Left ventricle myocardium superior (tissue), 1 donor: ENCODE measurements at regions of chr1 and their contacts with region 1.

Region 1: DNA sequence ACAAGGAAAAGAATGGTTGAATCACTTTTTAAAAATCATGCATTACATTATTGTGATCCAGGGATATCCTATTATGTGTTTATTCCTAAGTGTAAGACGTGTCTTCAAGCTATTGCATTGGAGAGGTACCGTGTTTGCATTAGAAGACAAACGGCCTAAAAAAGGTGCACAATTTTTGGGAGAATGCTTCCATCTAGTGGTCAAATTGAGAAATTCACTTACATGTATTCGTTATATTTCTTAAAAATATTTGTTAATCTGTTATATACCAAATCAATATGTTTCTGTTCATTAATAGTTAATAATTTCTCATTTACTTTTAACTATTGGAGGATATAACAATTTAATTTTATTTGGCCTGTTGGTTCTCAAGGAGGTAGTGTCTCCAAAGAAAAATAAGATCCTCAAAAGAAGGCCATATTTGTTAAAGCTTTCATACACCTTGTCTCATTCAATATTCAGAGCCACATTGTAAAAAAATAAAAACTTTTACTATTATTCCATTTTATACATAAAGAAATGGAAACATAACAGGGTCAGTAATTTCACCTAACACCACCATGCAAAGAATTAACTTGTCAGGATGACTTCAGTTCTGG is 40.5 kb upstream of the KCTD3 start:
- DNase-seq: no peak
- ATAC-seq: no peak

Region 2: GRCh38 chr1:214660862-214661261 is 865.8 kb before region 1 on chr1:
- intact Hi-C with region 1: loop called (anchors 10 kb)
- DNase-seq: no peak
- ATAC-seq: no peak

Region 3: GRCh38 chr1:215458104-215458503 is 68.5 kb before region 1 on chr1:
- intact Hi-C with region 1: no loop called
- DNase-seq: no peak
- ATAC-seq: no peak

Region 4: DNA sequence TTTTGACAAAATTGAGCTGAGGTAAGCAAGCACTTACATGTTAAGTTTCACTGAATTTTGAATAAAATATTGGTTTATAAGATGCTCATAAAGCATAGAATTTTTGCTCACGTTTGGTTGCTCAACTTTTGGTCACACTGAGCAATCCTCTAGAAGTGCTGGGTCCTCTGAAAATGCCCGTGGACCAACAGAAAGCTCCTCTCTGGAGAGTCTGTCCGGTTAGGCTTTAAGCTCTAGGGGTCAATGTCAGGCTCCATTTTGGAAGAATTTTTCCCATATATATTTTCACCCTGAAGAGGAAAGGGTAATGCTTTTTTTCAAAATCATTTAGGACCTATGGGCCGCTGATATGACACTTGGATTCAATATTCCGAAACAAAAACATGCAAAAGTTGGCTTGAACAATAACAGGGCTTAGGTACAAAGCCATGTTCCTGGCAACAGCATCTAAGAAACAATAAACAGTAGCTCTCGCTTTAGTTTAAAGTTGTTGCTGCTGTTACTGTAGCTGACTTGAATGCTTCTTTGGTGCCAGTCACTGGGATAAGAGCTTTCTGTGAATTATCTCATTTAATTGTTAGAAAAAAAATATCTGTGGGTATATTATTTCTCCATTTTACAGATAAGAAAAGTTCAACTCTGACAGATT is 1328.3 kb after region 1 on chr1:
- intact Hi-C with region 1: no loop called
- DNase-seq: no peak
- ATAC-seq: peak; percentile 74